ENCODE measurements at regions of chr10 and their contacts with region 1.

Region 1: GRCh38 chr10:6202684-6203330 is at the start of gene PFKFB3:
- DNase-seq: peak; percentile 95
- H3K4me3 ChIP-seq: peak within 1 kb of the TSS; percentile 71 to 77
- H3K27ac ChIP-seq: peak within 1 kb of the TSS; percentile 86 to 90
- H3K4me1 ChIP-seq: peaks cover 13% of the 10 kb centered on the region
- H3K27me3 ChIP-seq: no peaks in the 10 kb centered on the region
- CTCF ChIP-seq: peak; percentile 96 to 100 (median 99)
- POLR2A ChIP-seq: peak; percentile 99
- total RNA-seq, gene PFKFB3: 24.3 to 52.7 TPM

Region 2: GRCh38 chr10:6108603-6109443 is 94.0 kb before region 1 on chr10:
- intact Hi-C with region 1: loop called (anchors 2 kb)
- DNase-seq: no peak
- H3K4me3 ChIP-seq: no peak overlapping the region
- H3K27ac ChIP-seq: peak overlapping the region in 1 of 2 donors; percentile 50
- H3K4me1 ChIP-seq: no peaks in the 10 kb centered on the region
- H3K27me3 ChIP-seq: no peaks in the 10 kb centered on the region
- CTCF ChIP-seq: peak; percentile 35 to 82 (median 75)
- POLR2A ChIP-seq: no peak

Region 3: GRCh38 chr10:6144406-6145165 is 58.2 kb before region 1 on chr10:
- intact Hi-C with region 1: loop called (anchors 5 kb)
- DNase-seq: peak; percentile 82
- H3K4me3 ChIP-seq: peak overlapping the region; percentile 69 to 71
- H3K27ac ChIP-seq: peak overlapping the region; percentile 68 to 70
- H3K4me1 ChIP-seq: no peaks in the 10 kb centered on the region
- H3K27me3 ChIP-seq: no peaks in the 10 kb centered on the region
- CTCF ChIP-seq: no peak
- POLR2A ChIP-seq: peak; percentile 68

Region 4: GRCh38 chr10:6163364-6164270 is 39.2 kb before region 1 on chr10:
- intact Hi-C with region 1: loop called (anchors 5 kb)
- DNase-seq: peak; percentile 89
- H3K4me3 ChIP-seq: peak overlapping the region; percentile 45 to 52
- H3K27ac ChIP-seq: peak overlapping the region; percentile 71 to 83
- H3K4me1 ChIP-seq: no peaks in the 10 kb centered on the region
- H3K27me3 ChIP-seq: no peaks in the 10 kb centered on the region
- CTCF ChIP-seq: no peak
- POLR2A ChIP-seq: peak; percentile 21

Region 5: GRCh38 chr10:6254201-6254600 is 51.4 kb after region 1 on chr10:
- intact Hi-C with region 1: no loop called
- DNase-seq: no peak
- H3K4me3 ChIP-seq: no peak overlapping the region
- H3K27ac ChIP-seq: no peak overlapping the region
- H3K4me1 ChIP-seq: peaks cover 5% of the 10 kb centered on the region
- H3K27me3 ChIP-seq: no peaks in the 10 kb centered on the region
- CTCF ChIP-seq: no peak
- POLR2A ChIP-seq: no peak

Region 6: GRCh38 chr10:6401562-6402348 is 198.9 kb after region 1 on chr10:
- intact Hi-C with region 1: loop called (anchors 2 kb)
- DNase-seq: peak; percentile 80
- H3K4me3 ChIP-seq: peak overlapping the region; percentile 5 to 21
- H3K27ac ChIP-seq: peak overlapping the region; percentile 25 to 40
- H3K4me1 ChIP-seq: no peaks in the 10 kb centered on the region
- H3K27me3 ChIP-seq: no peaks in the 10 kb centered on the region
- CTCF ChIP-seq: peak; percentile 21 to 92 (median 82)
- POLR2A ChIP-seq: no peak